ENCODE measurements at regions of chr6 and their contacts with region 1.

Region 1: GRCh38 chr6:152948150-152948768 is 34.6 kb downstream of the FBXO5 start:
- DNase-seq: no peak
- H3K4me3 ChIP-seq: peak overlapping the region in 1 of 4 donors; percentile 18
- H3K27ac ChIP-seq: no peak overlapping the region
- H3K4me1 ChIP-seq: peaks cover 0 to 8% (median 0%) of the 10 kb centered on the region in 3 donors
- H3K27me3 ChIP-seq: peaks cover 0 to 14% (median 0%) of the 10 kb centered on the region in 4 donors
- CTCF ChIP-seq: peak; percentile 44 to 69 (median 53)
- POLR2A ChIP-seq: no peak

Region 2: DNA sequence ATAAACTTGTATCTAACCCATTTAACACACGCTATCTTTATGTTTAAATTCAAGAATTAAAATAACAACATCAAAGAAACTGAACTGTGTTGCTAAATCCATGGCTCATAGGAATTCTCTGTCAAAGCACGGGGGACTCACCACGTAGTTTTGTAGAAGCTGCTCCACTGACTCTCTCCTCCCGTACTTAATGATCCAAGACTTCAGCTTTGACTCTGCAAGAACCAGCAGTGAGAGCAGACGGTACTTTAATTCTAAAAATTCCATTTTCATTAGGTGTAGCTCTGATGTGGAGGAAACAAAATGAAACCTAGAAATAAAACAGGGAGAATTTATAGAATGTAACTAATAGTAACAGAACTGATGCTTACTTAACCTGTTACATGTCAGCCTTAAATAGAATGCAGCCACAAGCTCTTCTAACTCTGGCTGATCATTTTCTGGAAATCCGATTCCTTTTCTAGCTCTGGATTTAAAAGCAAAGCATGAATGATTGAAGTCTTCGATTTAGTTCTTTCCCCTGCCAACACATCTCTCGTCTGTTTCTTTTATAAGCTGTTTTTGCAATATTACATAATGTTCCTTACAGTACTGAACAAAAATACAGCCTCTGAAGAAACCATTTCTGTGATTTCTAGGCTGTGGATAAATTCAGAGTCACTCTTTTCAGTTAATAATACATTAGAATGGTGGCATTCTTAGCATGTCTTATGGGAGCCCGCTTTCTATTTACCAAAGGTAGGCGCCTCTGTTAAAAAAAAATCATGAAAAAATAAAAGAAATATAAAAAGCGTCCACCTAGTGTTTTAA is 476.6 kb before region 1 on chr6:
- intact Hi-C with region 1: no loop called
- DNase-seq: no peak
- H3K4me3 ChIP-seq: peak overlapping the region in 1 of 4 donors; percentile 37
- H3K27ac ChIP-seq: no peak overlapping the region
- H3K4me1 ChIP-seq: no peaks in the 10 kb centered on the region
- H3K27me3 ChIP-seq: no peaks in the 10 kb centered on the region
- CTCF ChIP-seq: no peak
- POLR2A ChIP-seq: no peak

Region 3: GRCh38 chr6:152863618-152864326 is 84.5 kb before region 1 on chr6:
- intact Hi-C with region 1: loop called (anchors 5 kb)
- DNase-seq: no peak
- H3K4me3 ChIP-seq: no peak overlapping the region
- H3K27ac ChIP-seq: no peak overlapping the region
- H3K4me1 ChIP-seq: no peaks in the 10 kb centered on the region
- H3K27me3 ChIP-seq: no peaks in the 10 kb centered on the region
- CTCF ChIP-seq: peak; percentile 44 to 72 (median 54)
- POLR2A ChIP-seq: no peak

Region 4: GRCh38 chr6:153013438-153013837 is 65.2 kb after region 1 on chr6:
- intact Hi-C with region 1: loop called (anchors 10 kb)
- DNase-seq: no peak
- H3K4me3 ChIP-seq: no peak overlapping the region
- H3K27ac ChIP-seq: no peak overlapping the region
- H3K4me1 ChIP-seq: no peaks in the 10 kb centered on the region
- H3K27me3 ChIP-seq: no peaks in the 10 kb centered on the region
- CTCF ChIP-seq: no peak
- POLR2A ChIP-seq: no peak

Region 5: DNA sequence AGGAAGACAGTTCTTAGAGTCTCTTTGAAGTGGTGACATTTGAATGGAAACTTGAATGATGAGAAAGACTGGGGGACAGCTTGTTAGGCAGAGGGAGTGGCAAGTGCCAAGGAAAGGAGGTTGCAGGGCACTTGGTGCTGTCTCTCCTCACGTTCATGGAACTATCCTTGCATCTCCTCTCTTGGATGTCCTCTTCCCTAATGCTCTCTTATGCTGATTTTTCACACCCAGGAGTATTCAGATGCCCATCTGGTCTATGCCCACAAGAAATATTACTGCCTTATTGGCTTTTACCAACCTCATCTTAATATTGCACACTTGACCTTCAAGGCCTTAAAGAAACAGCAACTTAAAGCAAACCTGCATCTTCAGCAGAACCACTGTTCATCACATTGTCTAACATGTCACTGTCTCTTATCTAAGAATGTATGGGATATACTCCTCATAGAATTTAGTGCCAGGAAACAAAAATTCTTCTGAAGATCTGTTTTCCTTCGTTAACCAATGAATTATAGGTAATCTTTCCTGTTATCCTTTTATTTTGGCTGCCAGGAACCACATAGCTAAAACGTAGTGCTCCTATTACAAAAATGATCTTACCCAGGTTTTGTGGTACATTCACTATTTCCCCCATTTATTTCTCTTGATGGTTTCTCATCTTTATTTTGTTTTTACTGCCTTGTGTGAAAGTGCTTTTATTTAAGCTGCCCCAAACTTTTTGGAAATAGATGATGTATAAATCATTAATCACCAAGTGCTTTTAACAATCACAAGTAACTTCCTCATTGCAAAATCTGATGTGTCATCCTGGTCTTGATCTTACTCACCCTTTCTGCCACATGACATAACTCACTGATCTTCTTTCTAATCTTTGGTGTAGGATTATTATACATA is 170.0 kb after region 1 on chr6:
- intact Hi-C with region 1: no loop called
- DNase-seq: no peak
- H3K4me3 ChIP-seq: no peak overlapping the region
- H3K27ac ChIP-seq: peak overlapping the region in 2 of 4 donors; percentile 60 to 74
- H3K4me1 ChIP-seq: peaks cover 0 to 14% (median 0%) of the 10 kb centered on the region in 3 donors
- H3K27me3 ChIP-seq: no peaks in the 10 kb centered on the region
- CTCF ChIP-seq: no peak
- POLR2A ChIP-seq: no peak